MCF 10A (cell line): ENCODE measurements at regions of chr13 and their contacts with region 1.

Region 1: GRCh38 chr13:27620377-27621115 is at the start of gene LNX2:
- DNase-seq: peak; percentile 97
- H3K4me3 Mint-ChIP-seq: peak within 1 kb of the TSS; percentile 93
- H3K27ac Mint-ChIP-seq: peak within 1 kb of the TSS; percentile 74
- H3K4me1 Mint-ChIP-seq: peaks cover 45% of the 10 kb centered on the region
- H3K27me3 Mint-ChIP-seq: no peaks in the 10 kb centered on the region
- CTCF ChIP-seq: no peak
- total RNA-seq, gene LNX2: 12.3 and 15.6 TPM in 2 replicates

Region 2: GRCh38 chr13:27362064-27362883 is 258.3 kb before region 1 on chr13:
- CTCF ChIA-PET with region 1: interaction called, 10 read pairs
- POLR2A ChIA-PET with region 1: no interaction called
- intact Hi-C with region 1: no loop called
- DNase-seq: peak; percentile 79
- H3K4me3 Mint-ChIP-seq: peak overlapping the region; percentile 49
- H3K27ac Mint-ChIP-seq: peak overlapping the region; percentile 49
- H3K4me1 Mint-ChIP-seq: no peaks in the 10 kb centered on the region
- H3K27me3 Mint-ChIP-seq: peaks cover 6% of the 10 kb centered on the region
- CTCF ChIP-seq: peak; percentile 92

Region 3: DNA sequence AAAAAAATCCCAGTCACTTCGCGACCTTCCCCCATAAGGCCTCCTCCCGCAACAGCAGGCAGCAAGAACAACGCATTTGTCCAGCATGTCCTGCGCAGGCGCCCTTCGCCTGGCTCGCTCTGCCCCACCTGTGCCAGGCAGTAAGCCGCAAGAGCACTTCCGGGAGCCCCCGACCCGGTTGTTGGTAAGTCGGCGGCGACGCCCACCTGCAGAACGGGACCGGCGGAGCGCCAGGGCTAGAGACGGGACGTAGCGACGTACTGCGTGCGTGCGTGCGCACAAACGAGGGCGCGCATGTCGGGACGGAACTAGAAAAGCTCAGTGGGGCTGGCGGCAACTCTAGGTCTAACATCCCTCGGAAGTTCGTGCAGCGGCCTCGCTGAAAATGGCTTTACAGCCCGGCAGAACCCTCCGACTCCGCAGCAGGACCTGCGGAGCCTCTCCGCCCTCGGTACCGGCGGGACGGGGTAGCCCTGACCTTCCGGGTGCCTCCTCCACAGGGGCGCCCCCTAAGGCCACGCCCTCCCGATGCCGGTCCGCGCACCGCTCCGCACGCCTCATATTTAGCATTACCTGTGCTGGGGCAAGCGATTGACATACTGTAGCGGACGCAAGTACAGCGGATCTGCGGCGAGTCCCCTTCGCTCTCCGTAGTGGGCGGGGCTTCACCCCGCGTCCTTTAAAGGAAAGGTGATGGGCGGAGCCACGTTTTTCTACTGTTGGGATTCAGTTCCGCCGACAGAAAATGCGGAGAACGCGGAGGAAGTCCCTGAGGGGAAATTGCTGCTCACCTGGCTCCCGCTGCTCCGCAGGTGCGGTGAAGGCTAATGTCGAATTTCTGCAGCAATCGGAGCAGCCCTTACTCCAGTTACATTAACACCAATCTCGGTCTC is 170.4 kb before region 1 on chr13 and contains the start of gene MTIF3:
- CTCF ChIA-PET with region 1: no interaction called
- POLR2A ChIA-PET with region 1: interaction called, 158 read pairs
- intact Hi-C with region 1: loop called (anchors 2 kb)
- DNase-seq: peak; percentile 95
- H3K4me3 Mint-ChIP-seq: peak within 1 kb of the TSS; percentile 84
- H3K27ac Mint-ChIP-seq: peak within 1 kb of the TSS; percentile 97
- H3K4me1 Mint-ChIP-seq: peaks cover 16% of the 10 kb centered on the region
- H3K27me3 Mint-ChIP-seq: no peaks in the 10 kb centered on the region
- CTCF ChIP-seq: no peak
- total RNA-seq, gene MTIF3: 35.6 and 40.9 TPM in 2 replicates

Region 4: GRCh38 chr13:27533155-27533643 is 87.3 kb before region 1 on chr13:
- CTCF ChIA-PET with region 1: interaction called, 4 read pairs
- POLR2A ChIA-PET with region 1: interaction called, 11 read pairs
- intact Hi-C with region 1: loop called (anchors 2 kb)
- DNase-seq: peak; percentile 74
- H3K4me3 Mint-ChIP-seq: no peak overlapping the region
- H3K27ac Mint-ChIP-seq: no peak overlapping the region
- H3K4me1 Mint-ChIP-seq: peaks cover 8% of the 10 kb centered on the region
- H3K27me3 Mint-ChIP-seq: no peaks in the 10 kb centered on the region
- CTCF ChIP-seq: peak; percentile 80

Region 5: DNA sequence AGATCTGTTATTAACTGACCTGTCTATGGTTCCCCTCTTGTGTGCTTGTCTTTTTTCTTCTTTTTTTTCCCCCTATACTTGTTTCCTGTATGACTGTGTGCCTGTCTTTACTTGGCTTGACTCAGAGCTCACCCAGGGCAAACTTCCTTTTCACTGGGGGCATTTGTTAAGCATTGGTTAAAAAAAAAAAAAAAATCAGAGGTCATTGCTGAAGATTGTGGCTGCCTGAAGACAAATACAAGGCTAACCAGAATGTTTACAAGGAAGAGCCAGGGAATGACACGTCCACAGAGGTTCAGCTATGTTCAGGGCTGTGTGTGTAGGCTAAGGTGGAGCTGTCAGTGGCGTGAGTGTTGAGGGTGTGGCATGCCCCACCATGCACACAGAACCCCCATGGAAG is 47.3 kb before region 1 on chr13:
- CTCF ChIA-PET with region 1: interaction called, 4 read pairs
- POLR2A ChIA-PET with region 1: interaction called, 11 read pairs
- intact Hi-C with region 1: loop called (anchors 1 kb)
- DNase-seq: no peak
- H3K4me3 Mint-ChIP-seq: no peak overlapping the region
- H3K27ac Mint-ChIP-seq: peak overlapping the region; percentile 63
- H3K4me1 Mint-ChIP-seq: peaks cover 12% of the 10 kb centered on the region
- H3K27me3 Mint-ChIP-seq: no peaks in the 10 kb centered on the region
- CTCF ChIP-seq: no peak

Region 6: DNA sequence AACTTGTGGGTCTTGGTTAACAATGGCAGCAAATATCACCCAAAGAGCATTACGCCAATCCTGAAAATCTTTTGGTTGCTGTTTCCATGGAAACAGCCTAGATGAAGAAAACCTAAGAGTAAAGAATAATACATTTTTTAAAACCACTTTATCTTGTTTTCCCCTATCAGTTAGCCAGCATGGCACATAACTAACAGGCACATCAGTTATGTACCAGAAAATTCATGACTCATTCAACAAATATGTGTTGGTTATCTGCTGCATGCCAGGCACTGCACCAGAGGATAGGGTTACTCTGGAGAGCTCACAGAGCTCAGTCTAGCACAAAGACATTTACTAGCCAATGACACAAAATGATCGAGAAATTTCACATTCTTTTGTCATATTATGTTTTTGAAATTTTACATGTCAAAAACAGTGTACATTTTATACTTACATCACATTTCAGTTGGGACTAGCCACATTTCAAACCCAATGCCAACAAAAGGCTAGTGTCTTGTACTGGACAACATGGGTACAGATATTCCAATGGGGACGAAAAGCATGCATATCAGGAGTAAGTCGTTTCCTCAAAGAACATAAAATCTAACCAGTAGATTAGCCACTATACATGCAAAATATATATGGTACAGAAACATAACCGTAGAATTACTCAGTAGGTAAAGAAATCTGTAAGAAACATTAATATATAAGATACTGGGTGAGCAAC is 20.5 kb before region 1 on chr13:
- CTCF ChIA-PET with region 1: interaction called, 3 read pairs
- POLR2A ChIA-PET with region 1: interaction called, 226 read pairs
- intact Hi-C with region 1: no loop called
- DNase-seq: peak; percentile 59
- H3K4me3 Mint-ChIP-seq: no peak overlapping the region
- H3K27ac Mint-ChIP-seq: no peak overlapping the region
- H3K4me1 Mint-ChIP-seq: peaks cover 18% of the 10 kb centered on the region
- H3K27me3 Mint-ChIP-seq: no peaks in the 10 kb centered on the region
- CTCF ChIP-seq: no peak

Region 7: GRCh38 chr13:27644302-27644701 is 23.8 kb after region 1 on chr13:
- CTCF ChIA-PET with region 1: interaction called, 4 read pairs
- POLR2A ChIA-PET with region 1: interaction called, 108 read pairs
- intact Hi-C with region 1: no loop called
- DNase-seq: peak; percentile 2
- H3K4me3 Mint-ChIP-seq: no peak overlapping the region
- H3K27ac Mint-ChIP-seq: no peak overlapping the region
- H3K4me1 Mint-ChIP-seq: peaks cover 29% of the 10 kb centered on the region
- H3K27me3 Mint-ChIP-seq: no peaks in the 10 kb centered on the region
- CTCF ChIP-seq: no peak